AG04450 (cell line): ENCODE measurements at regions of chr10 and their contacts with region 1.

Region 1: GRCh38 chr10:13099666-13100348 is at the start of gene OPTN:
- DNase-seq: peak; percentile 59
- H3K4me3 ChIP-seq: peak within 1 kb of the TSS; percentile 88
- H3K27ac ChIP-seq: peak within 1 kb of the TSS; percentile 82
- H3K27me3 ChIP-seq: no peaks in the 10 kb centered on the region
- CTCF ChIP-seq: peak; percentile 79
- polyA plus RNA-seq, gene OPTN: 73.8 and 82.7 TPM in 2 replicates

Region 2: DNA sequence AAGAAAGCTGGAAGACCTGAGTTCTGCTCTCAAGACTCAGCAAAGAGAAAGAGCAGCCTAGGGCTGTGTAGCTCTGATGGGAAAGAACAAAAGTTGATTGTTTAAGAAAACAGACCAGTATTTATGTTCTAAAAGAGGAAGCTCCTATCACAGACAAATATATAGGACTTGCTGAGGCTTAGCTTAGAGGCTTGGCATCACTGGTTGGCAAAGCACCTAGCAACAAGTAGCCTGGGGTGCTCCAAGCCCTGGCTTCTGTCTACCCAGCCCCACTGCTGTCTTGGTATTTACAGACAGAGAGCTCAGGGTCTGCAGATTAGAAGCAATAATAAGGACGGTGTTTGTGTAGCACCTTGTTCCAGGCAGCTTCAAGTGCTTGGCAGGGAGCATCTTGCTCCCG is 61.4 kb before region 1 on chr10:
- CTCF ChIA-PET with region 1: no interaction called
- POLR2A ChIA-PET with region 1: no interaction called
- DNase-seq: no peak
- H3K4me3 ChIP-seq: no peak overlapping the region
- H3K27ac ChIP-seq: no peak overlapping the region
- H3K27me3 ChIP-seq: peaks cover 10% of the 10 kb centered on the region
- CTCF ChIP-seq: no peak

Region 3: DNA sequence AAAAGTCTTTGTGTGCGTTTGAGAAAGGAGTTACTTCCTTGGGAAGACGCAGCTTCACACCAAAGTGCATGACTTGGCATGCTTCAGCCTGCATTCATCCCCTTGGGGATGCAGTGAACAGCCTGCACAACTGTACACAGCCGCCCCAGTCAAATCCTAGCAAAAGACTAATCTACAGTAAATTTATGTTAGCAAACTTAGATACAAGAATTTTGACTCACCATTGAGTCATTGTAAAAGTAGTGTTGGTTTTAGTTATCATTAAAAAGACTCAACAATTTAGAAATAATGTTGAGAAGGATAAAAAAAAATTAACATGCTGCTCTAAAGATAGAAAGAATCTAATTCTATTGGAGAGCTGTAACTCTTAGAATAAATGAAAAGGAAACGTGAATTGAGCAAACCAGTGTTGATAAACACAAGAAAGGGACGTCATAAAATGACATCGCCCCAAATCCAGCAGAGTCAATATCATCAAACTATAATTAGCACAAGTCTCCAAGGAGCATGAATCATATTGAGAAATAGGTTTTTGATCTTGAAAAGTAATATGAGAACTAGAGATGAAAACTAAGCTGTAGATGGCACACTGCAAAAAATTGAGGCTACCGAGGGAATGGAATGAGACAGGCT is 11.7 kb before region 1 on chr10:
- CTCF ChIA-PET with region 1: interaction called, 17 read pairs
- POLR2A ChIA-PET with region 1: interaction called, 7 read pairs
- DNase-seq: peak; percentile 38
- H3K4me3 ChIP-seq: no peak overlapping the region
- H3K27ac ChIP-seq: peak overlapping the region; percentile 72
- H3K27me3 ChIP-seq: no peaks in the 10 kb centered on the region
- CTCF ChIP-seq: no peak

Region 4: DNA sequence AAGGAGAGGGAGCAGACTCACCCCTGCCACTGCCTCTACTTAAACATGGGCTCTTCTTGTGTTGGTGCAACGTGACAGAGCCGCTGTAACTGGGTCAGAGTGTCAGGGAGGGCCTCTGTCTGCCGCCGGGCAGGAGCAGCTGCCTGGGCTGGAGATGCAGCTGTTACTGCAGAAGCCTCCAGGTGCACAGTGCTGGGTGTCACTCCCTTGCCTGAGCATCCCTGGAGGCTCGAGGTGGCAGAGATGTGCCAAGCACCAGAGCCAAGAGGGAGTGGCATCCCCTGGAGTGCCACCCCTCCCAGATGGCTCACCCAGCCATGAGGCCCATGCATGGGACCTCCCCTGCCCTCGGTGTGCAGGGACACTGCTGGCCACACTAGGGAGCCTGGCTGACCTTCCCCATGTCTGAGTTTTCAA is 632.7 kb after region 1 on chr10:
- CTCF ChIA-PET with region 1: no interaction called
- POLR2A ChIA-PET with region 1: no interaction called
- DNase-seq: no peak
- H3K4me3 ChIP-seq: no peak overlapping the region
- H3K27ac ChIP-seq: no peak overlapping the region
- H3K27me3 ChIP-seq: no peaks in the 10 kb centered on the region
- CTCF ChIP-seq: no peak